Right ventricle myocardium inferior (tissue), 1 donor: ENCODE measurements at regions of chr3 and their contacts with region 1.

Region 1: DNA sequence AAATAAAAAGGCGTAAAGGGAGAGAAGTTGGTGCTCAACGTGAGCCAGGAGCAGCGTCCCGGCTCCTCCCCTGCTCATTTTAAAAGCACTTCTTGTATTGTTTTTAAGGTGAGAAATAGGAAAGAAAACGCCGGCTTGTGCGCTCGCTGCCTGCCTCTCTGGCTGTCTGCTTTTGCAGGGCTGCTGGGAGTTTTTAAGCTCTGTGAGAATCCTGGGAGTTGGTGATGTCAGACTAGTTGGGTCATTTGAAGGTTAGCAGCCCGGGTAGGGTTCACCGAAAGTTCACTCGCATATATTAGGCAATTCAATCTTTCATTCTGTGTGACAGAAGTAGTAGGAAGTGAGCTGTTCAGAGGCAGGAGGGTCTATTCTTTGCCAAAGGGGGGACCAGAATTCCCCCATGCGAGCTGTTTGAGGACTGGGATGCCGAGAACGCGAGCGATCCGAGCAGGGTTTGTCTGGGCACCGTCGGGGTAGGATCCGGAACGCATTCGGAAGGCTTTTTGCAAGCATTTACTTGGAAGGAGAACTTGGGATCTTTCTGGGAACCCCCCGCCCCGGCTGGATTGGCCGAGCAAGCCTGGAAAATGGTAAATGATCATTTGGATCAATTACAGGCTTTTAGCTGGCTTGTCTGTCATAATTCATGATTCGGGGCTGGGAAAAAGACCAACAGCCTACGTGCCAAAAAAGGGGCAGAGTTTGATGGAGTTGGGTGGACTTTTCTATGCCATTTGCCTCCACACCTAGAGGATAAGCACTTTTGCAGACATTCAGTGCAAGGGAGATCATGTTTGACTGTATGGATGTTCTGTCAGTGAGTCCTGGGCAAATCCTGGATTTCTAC is at the start of gene RARB:
- DNase-seq: peak; percentile 83
- ATAC-seq: peak; percentile 93
- total RNA-seq, gene RARB: 17.5 TPM

Region 2: DNA sequence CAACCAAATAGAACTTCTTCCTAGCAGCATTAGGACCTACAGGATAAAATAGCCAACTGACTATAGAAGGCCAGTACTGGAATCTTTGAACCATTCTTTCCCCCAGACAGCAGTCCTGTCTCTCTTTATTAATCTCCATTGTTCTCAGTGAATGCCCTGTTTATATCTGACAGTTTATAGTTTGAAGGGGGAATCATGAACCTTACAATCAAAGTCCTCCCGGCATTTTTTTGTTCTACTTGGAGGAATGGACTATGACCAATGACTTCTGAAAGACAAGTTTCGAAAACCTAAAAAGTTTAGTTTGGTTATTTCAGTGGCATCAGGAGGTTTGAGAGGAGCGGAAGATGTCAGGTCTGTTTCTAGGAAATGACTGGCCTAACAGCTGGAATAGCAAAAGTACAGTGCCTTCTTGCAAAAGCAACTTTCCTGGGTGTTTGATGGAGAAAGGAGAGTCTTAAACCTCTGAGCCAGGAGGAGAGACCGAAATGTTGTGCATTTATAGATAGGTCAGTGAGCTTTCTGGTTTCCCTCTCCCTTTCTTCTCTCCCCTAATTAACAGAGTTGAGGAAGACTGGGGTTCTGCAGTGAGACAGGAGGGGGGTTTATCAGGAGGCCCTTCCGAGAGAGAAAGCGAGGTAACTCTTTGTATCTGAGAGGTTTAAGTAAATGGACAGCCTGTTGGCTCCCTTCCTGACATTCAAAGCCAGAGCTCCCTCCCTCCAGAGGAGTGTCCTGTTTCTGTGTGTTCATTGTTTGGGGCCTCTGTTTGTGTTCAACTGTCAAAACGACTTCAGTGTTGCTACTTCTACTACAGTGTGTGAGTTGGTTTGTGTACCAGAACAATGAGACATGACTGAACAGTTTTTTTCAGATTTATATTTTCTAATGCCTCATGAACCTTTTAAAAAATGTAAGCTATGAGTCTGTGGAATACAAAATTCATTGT is 383.1 kb before region 1 on chr3:
- intact Hi-C with region 1: loop called (anchors 5 kb)
- DNase-seq: no peak
- ATAC-seq: peak; percentile 69

Region 3: GRCh38 chr3:25324954-25325655 is 103.1 kb before region 1 on chr3:
- intact Hi-C with region 1: loop called (anchors 5 kb)
- DNase-seq: no peak
- ATAC-seq: peak; percentile 69

Region 4: GRCh38 chr3:25483456-25483855 is 55.3 kb after region 1 on chr3:
- intact Hi-C with region 1: loop called (anchors 5 kb)
- DNase-seq: no peak
- ATAC-seq: peak; percentile 44

Region 5: GRCh38 chr3:25532431-25533162 is 104.4 kb after region 1 on chr3:
- intact Hi-C with region 1: no loop called
- DNase-seq: no peak
- ATAC-seq: no peak